Activated CD4-positive, alpha-beta T cell treated with anti-CD3 and anti-CD28 coated beads, Interleukin-2, amount 10 ng/mL, durations not matched to agents 24 days and 14 days (primary cell): ENCODE measurements at regions of chr17 and their contacts with region 1.

Region 1: GRCh38 chr17:14069251-14070021 is at the start of gene COX10:
- DNase-seq: peak; percentile 97
- H3K4me3 Mint-ChIP-seq: peak within 1 kb of the TSS; percentile 96
- H3K27ac Mint-ChIP-seq: peak within 1 kb of the TSS; percentile 94
- H3K4me1 Mint-ChIP-seq: peaks cover 48% of the 10 kb centered on the region
- H3K27me3 Mint-ChIP-seq: no peaks in the 10 kb centered on the region
- total RNA-seq, gene COX10: 33.5 and 36.1 TPM in 2 replicates

Region 2: GRCh38 chr17:14098224-14098623 is 28.8 kb after region 1 on chr17:
- intact Hi-C with region 1: no loop called
- DNase-seq: no peak
- H3K4me3 Mint-ChIP-seq: no peak overlapping the region
- H3K27ac Mint-ChIP-seq: no peak overlapping the region
- H3K4me1 Mint-ChIP-seq: peaks cover 26% of the 10 kb centered on the region
- H3K27me3 Mint-ChIP-seq: no peaks in the 10 kb centered on the region

Region 3: DNA sequence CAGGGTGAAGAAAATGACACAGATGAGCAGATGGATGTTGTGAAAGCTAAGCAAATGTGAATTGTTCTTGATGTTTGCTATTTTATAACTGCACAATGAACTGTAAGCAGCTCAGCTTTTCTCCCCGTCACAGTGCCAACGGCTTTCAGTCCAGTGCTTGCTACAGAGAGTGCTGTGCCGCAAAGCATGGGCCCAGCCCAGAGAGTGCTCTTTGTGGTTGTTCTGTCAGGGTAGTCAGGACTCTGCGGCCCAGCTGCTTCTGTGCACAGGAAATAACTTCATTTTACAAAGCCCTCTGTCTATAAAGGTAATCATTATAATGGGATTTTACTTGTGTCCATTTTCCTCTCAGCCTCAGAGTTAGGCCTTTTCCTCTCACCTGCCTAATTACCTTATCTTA is 128.2 kb after region 1 on chr17:
- intact Hi-C with region 1: loop called (anchors 1 kb)
- DNase-seq: peak; percentile 88
- H3K4me3 Mint-ChIP-seq: peak overlapping the region; percentile 72
- H3K27ac Mint-ChIP-seq: peak overlapping the region; percentile 88
- H3K4me1 Mint-ChIP-seq: peaks cover 83% of the 10 kb centered on the region
- H3K27me3 Mint-ChIP-seq: no peaks in the 10 kb centered on the region